RWPE1 (cell line): ENCODE measurements at regions of chr1 and their contacts with region 1.

Region 1: GRCh38 chr1:205591522-205592351 is 40.1 kb downstream of the ELK4 start:
- DNase-seq: peak; percentile 98
- H3K27ac ChIP-seq: peak overlapping the region; percentile 79
- CTCF ChIP-seq: peak; percentile 98

Region 2: DNA sequence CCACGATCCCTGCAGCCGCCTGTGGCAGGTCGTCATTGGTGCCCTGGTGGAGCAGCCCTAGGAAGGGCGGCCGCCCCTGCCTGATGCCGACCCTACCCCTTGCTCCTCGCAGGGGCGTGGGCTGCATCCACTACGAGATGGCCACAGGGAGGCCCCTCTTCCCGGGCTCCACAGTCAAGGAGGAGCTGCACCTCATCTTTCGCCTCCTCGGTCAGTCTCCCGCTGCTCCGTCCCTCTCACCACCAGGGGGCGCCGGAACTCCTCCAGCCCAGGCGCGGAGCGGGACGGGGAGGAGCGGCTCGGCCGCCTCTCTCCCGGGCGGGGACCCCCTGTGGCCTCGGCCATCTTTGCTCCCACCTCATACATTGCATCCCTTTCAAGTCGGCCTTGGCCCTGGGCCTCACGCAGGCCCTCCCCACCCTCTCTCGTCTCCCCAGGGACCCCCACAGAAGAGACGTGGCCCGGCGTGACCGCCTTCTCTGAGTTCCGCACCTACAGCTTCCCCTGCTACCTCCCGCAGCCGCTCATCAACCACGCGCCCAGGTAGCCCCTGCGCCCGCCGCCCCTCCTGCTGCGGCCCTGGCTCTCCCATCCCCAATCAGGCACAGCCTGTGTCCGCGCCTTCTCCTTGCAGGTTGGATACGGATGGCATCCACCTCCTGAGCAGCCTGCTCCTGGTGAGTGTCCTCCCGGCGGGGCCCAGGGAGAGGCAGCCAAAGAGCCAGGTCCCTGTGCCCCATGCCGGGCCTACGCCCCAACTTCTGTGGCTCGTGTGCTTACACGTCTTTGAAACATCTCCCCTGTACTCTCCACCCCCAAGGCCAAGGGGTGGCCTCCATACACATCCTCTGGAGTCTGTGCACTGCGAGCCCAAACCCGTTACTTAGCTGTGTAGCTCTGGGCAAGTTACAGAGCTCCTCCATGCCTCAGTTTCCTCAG is 62.6 kb before region 1 on chr1:
- CTCF ChIA-PET with region 1: interaction called, 29 read pairs
- POLR2A ChIA-PET with region 1: no interaction called
- DNase-seq: peak; percentile 89
- H3K27ac ChIP-seq: no peak overlapping the region
- CTCF ChIP-seq: peak; percentile 93

Region 3: GRCh38 chr1:205568469-205569361 is 23.0 kb before region 1 on chr1:
- CTCF ChIA-PET with region 1: interaction called, 11 read pairs
- POLR2A ChIA-PET with region 1: no interaction called
- DNase-seq: peak; percentile 34
- H3K27ac ChIP-seq: no peak overlapping the region
- CTCF ChIP-seq: no peak

Region 4: DNA sequence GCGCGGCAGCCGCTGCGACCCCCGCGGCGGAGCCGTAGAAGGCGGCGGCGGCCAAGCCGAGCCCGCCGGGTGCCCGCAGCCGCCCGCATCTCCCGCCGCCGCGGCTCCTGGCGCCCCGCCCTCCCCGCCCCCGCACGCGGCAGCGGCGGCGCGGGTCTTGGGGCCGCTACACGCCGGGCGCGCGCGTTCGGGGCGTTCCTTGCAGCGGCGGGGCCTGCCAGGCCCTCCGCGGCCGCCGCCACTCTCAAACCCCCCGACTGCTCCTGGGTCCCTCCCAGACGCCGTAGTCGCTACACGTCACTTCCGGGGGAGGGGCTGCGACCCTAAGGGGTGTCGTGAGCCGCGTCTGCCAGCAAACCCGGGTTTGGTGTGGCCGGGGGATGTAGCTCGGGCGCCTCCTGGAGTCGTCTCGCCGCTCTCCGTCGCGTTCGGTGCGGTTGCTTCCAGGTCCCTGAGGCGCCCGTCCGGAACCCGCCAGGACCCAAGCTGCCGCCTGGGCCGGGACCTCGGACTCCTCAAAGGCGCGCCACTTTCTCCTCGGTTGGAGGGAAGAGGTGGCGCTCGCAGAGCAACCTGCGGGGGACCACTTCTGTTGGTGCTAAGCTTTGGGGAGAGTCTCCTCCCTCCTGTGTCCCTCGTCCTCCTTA is 40.1 kb after region 1 on chr1 and contains the start of gene ELK4:
- CTCF ChIA-PET with region 1: interaction called, 89 read pairs
- POLR2A ChIA-PET with region 1: interaction called, 28 read pairs
- DNase-seq: peak; percentile 99
- H3K27ac ChIP-seq: peak within 1 kb of the TSS; percentile 98
- CTCF ChIP-seq: peak; percentile 76

Region 5: GRCh38 chr1:205689479-205689878 is 97.7 kb after region 1 on chr1:
- CTCF ChIA-PET with region 1: interaction called, 14 read pairs
- POLR2A ChIA-PET with region 1: no interaction called
- DNase-seq: no peak
- H3K27ac ChIP-seq: no peak overlapping the region
- CTCF ChIP-seq: no peak

Region 6: DNA sequence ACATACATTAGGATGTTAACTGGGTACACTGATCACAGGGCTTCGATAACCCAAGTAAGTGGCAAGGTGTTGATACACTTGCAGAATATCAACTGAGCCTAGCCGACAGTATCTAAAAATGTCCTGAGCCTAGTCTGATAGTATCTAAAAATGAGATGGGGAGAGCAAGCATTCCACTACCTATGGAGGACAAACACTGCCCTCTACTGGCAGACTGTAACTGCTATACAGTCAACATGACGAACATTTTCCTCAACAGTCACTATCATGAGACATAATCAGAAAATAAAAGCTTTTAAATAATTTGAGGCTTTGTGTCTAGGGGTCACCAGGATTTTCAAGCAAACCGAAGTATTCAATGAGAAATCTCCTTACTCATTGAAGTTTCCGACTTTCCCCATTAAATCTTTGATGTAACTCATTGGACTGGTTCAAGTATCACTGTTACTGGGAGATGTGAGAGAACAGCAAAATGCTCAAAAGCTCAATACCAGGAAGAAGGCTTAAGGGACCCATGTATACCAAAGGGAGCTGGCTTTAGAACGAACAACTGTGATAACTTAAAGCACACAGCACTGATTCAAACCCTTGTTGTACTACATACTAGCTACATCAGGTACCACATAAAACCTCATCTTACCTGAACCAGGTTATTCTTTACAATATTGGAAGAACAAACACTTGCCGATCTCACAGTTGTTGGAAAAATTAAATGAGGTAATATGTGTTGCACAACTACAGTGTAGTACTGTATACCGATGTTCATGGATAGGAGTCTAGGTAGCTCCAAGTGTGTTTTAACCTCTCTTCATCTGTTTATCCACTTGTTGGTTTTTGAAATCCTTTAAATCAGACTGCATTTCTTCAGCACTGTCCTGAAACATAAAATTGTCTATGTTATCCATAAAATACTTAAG is 119.6 kb after region 1 on chr1:
- CTCF ChIA-PET with region 1: interaction called, 35 read pairs
- POLR2A ChIA-PET with region 1: no interaction called
- DNase-seq: peak; percentile 74
- H3K27ac ChIP-seq: no peak overlapping the region
- CTCF ChIP-seq: peak; percentile 79

Region 7: GRCh38 chr1:205748403-205749233 is 156.9 kb after region 1 on chr1:
- CTCF ChIA-PET with region 1: no interaction called
- POLR2A ChIA-PET with region 1: no interaction called
- DNase-seq: peak; percentile 33
- H3K27ac ChIP-seq: peak overlapping the region; percentile 99
- CTCF ChIP-seq: no peak